Right cardiac atrium (tissue), 5 donors: ENCODE measurements at regions of chr7 and their contacts with region 1.

Region 1: DNA sequence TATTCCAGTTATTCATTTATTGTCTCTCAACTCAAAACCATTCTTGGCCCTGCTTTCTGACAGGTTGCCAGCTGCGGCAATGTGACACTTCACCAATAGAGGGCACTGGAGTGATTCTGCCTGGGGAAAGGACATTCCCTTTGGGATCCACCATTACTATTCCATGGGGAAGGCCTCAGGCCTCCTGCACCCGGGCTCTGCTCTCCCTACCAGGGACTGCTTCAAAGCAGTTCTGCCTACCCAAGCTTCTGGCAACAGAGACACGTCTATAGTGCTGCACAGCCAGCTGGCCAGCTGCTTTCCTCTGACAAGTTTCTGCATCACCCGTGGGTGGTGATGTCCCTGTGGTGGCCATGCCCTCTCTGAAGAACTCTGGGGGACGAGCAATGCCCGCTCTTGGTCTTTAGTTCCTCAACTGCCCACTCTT is 163.8 kb downstream of the ELMO1 start:
- DNase-seq: peak; percentile 25 to 79 (median 74)
- ATAC-seq: peak; percentile 51 to 58
- H3K4me3 ChIP-seq: no peak overlapping the region
- H3K27ac ChIP-seq: peak overlapping the region; percentile 3
- H3K4me1 ChIP-seq: peaks cover 20% of the 10 kb centered on the region
- H3K27me3 ChIP-seq: no peaks in the 10 kb centered on the region

Region 2: GRCh38 chr7:37352974-37353948 is 68.4 kb after region 1 on chr7:
- intact Hi-C with region 1: loop called in 1 of 4 experiments (anchors 10 kb)
- DNase-seq: peak in 2 of 3 donors; percentile 27 to 49
- ATAC-seq: peak; percentile 8 to 16
- H3K4me3 ChIP-seq: no peak overlapping the region
- H3K27ac ChIP-seq: peak overlapping the region; percentile 80
- H3K4me1 ChIP-seq: peaks cover 11% of the 10 kb centered on the region
- H3K27me3 ChIP-seq: no peaks in the 10 kb centered on the region

Region 3: DNA sequence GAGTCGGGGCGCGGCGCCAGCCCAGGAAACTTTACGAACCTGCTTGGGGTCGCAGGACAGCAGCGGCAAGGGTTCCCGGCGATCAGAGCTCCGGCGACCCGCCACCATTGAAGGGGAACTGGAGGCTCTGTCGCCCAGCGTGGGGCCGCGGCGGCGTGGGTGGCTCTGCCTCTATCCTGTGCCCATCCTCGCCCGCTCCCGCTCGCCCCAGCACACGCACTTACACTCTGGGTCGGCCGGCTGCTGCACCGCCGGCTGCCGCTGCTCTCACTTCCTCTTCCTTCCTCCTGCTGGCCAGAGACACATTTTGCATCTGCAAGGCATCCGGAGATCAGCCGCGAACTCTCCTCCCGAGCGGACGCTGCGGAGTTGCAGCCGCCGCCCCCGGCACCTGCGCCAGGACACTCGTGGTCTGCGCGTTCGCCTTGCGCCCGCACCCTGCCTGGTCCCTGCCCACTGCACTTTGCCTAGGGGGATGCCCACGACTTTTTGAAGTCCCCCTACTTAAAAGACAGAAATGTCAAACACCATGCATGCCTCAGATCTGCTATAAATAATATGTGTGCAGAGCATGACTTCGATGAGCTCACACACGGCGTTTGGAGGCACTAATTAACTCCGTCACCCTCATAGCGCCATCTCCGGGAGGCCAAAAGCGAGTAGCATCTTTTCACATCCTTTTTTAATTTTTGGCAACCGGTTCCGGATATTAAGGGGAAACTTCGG is 164.0 kb after region 1 on chr7 and contains the start of gene ELMO1:
- intact Hi-C with region 1: loop called in 1 of 4 experiments (anchors 5 kb)
- DNase-seq: peak; percentile 83 to 92 (median 90)
- ATAC-seq: peak; percentile 89
- H3K4me3 ChIP-seq: peak within 1 kb of the TSS; percentile 76
- H3K27ac ChIP-seq: peak within 1 kb of the TSS; percentile 77
- H3K4me1 ChIP-seq: peaks cover 2% of the 10 kb centered on the region
- H3K27me3 ChIP-seq: no peaks in the 10 kb centered on the region
- total RNA-seq, gene ELMO1: 17.9 to 20.8 (median 18.9) TPM

Region 4: GRCh38 chr7:37495574-37496184 is 210.9 kb after region 1 on chr7:
- intact Hi-C with region 1: loop called in 1 of 4 experiments (anchors 10 kb)
- DNase-seq: no peak
- ATAC-seq: peak in 1 of 2 donors; percentile 28
- H3K4me3 ChIP-seq: no peak overlapping the region
- H3K27ac ChIP-seq: no peak overlapping the region
- H3K4me1 ChIP-seq: no peaks in the 10 kb centered on the region
- H3K27me3 ChIP-seq: no peaks in the 10 kb centered on the region